ENCODE measurements at regions of chr1 and their contacts with region 1.

Region 1: DNA sequence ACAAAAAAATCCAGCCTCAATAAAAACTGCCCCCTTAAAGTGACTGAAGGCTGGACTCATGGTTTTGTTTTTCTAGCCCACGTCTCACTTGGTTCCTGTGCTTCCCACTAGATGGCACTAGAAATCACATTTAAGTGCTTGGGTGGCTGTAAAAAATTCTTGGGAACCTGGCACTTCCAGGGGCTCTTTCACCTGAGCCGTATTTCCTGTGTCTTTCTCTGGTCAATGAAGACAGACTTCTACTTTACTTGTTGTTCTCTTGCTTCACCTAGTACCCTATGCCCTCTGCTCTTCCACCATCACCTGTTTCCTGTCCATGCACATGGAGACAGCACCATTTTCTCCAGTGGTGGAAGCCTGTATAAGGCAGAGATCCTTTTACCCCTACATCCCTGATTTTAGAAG is 20.0 kb downstream of the METTL13 start:
- DNase-seq: no peak
- ATAC-seq: peak; percentile 57 to 75 (median 70)
- H3K4me3 ChIP-seq: no peak overlapping the region
- H3K27ac ChIP-seq: no peak overlapping the region
- H3K4me1 ChIP-seq: no peaks in the 10 kb centered on the region
- H3K27me3 ChIP-seq: no peaks in the 10 kb centered on the region
- CTCF ChIP-seq: peak; percentile 54 to 72 (median 66)
- POLR2A ChIP-seq: no peak

Region 2: DNA sequence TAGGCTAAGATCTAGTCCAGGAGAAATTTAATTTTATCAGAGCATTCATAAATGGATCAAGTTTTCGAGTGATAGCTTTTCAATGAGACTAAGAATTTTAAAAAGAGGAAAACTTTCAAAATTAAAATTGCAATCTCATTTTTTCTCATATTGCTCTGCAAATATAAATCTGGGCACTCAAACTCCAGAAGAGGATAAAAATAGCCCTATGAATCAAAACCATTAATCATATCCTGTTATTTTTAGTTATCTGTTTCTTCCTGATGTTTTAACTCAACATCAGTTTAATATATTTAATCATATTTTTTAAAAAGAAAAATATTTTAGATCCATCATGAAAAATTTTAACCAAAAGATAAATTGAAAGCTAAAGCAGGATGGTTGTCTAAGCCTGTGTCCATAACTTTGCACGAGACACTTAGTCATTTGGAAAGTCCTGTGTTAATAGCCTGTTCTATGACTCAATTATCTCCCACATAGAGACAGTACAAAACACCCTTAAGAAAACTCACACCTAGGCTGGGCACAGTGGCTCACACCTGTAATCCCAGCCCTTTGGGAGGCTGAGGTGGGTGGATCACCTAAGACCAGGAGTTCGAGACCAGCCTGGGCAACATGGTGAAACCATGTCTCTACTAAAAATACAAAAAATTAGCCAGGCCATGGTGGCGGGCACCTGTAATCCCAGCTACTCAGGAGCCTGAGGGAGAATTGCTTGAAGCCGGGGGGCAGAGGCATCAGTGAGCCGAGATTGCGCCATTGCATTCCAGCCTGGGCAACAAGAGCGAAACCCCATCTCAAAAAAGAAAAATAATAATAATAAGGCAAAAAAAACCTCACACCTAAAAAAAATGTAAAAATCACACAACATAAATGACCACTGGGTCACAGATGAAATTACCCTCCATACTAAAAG is 333.1 kb before region 1 on chr1:
- intact Hi-C with region 1: no loop called
- DNase-seq: no peak
- ATAC-seq: no peak
- H3K4me3 ChIP-seq: no peak overlapping the region
- H3K27ac ChIP-seq: no peak overlapping the region
- H3K4me1 ChIP-seq: no peaks in the 10 kb centered on the region
- H3K27me3 ChIP-seq: no peaks in the 10 kb centered on the region
- CTCF ChIP-seq: no peak
- POLR2A ChIP-seq: no peak

Region 3: DNA sequence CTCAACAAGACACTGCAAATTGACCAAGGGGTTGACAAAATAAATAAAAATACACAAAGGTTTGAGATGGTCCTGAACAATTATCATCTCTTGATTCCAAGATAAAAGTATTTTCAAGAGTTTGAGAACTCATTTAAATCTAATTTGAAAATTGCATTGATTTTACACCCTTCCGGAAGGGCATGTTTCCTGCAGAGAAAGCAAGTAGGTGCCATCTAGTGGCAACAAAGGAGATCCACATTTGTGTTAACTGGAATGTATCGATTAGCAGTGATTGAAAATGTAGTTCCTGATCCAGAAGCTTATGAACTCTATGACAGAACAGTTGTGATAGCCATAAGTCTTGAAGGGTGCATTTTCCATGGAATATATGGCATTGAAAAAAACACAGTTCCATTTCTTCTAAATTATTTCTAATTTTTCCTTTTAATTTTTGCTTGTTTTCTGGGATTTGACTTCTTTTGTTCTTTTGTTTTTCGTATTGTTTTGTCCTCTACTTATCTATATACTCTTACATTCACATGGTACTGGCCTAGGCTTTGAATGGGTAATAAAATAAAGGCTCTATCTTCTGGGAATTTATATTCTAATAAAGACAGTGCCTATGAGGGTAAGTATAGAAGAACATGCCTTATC is 183.5 kb after region 1 on chr1:
- intact Hi-C with region 1: loop called in 1 of 2 experiments (anchors 5 kb)
- DNase-seq: no peak
- ATAC-seq: peak; percentile 69 to 90 (median 82)
- H3K4me3 ChIP-seq: no peak overlapping the region
- H3K27ac ChIP-seq: no peak overlapping the region
- H3K4me1 ChIP-seq: peaks cover 0 to 5% (median 0%) of the 10 kb centered on the region in 4 donors
- H3K27me3 ChIP-seq: no peaks in the 10 kb centered on the region
- CTCF ChIP-seq: peak; percentile 74 to 83 (median 80)
- POLR2A ChIP-seq: no peak

Region 4: GRCh38 chr1:172002725-172003345 is 201.3 kb after region 1 on chr1:
- intact Hi-C with region 1: no loop called
- DNase-seq: no peak
- ATAC-seq: peak; percentile 55 to 62 (median 58)
- H3K4me3 ChIP-seq: no peak overlapping the region
- H3K27ac ChIP-seq: no peak overlapping the region
- H3K4me1 ChIP-seq: peaks cover 0 to 11% (median 0%) of the 10 kb centered on the region in 4 donors
- H3K27me3 ChIP-seq: no peaks in the 10 kb centered on the region
- CTCF ChIP-seq: peak; percentile 58 to 76 (median 76)
- POLR2A ChIP-seq: no peak